IMR-90 (cell line): ENCODE measurements at regions of chr7 and their contacts with region 1.

Region 1: DNA sequence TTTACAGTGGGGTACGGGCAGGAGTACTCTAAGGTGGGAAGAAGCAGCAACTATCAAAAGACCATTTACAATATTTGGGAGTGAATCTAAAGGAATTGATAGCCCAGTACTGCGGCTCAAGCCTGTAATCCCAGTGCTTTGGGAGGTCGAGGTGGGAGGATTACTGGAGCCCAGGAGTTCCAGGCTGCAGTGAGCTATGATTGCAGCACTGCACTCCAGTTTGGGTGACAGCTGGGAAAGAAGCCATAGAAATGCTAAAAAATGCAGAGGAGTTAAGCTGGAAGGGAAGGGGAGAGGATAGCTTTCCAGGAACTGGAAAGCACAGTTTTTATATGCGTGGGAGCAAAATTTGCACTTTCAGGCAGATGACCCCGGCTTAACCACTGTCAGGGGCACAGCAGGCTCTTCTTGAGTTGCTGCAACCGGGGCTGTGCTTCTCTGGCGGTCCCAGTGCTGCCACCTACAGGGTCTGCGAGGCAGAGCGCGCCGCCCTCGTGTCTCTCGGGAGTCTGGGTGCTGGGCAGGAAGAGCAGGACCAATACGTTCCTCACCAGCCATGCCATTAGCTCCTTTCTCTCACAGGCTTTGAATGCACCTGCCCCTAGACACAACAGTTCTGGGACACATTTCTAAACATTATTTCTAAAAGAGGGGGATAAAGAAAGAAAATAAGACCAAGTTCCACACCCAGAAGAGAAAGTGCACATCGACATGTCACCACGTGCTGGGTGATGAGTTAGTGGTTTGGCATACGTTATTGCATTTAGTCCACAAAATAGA is 10.1 kb upstream of the BMPER start:
- DNase-seq: peak; percentile 75
- ATAC-seq: peak; percentile 100
- H3K4me3 ChIP-seq: no peak overlapping the region
- H3K27ac ChIP-seq: no peak overlapping the region
- H3K4me1 ChIP-seq: no peaks in the 10 kb centered on the region
- H3K27me3 ChIP-seq: peaks cover 13% of the 10 kb centered on the region
- CTCF ChIP-seq: peak; percentile 85
- POLR2A ChIP-seq: no peak
- RAD21 ChIP-seq: peak; percentile 82

Region 2: DNA sequence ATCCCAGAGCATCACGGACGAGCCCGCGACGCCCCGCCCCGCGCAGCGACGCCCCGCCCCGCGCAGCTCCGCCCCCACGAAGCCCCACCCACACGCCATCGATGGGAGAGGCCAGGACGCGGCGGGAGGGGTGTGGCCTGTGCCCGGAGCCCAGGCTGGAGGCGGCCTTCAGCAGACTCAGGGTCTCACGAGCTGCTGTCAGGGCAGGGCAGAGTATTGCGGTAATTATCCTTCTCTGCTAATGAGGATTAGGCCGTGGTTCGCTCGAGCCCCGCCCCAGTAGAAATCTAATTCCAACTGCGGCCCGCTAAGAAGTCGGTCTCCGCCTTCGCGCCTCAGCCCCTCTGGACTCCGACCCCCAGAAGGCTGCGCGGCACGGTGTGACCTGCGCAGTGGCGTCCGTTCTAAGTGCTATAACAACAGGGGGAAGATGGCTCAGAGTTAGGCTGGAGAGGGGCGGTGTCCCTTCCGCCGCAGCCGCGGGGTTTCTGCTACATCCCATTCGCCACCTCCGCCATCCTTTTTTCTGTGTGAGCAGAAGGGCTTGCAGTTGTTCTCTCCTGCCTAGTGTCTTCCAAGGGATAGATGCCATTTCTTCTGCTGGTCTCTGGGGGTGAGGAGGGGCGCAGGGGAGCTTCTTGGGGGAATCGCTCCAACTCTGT is 832.3 kb before region 1 on chr7:
- CTCF ChIA-PET with region 1: no interaction called
- POLR2A ChIA-PET with region 1: no interaction called
- dilution Hi-C with region 1: no loop called
- in situ Hi-C with region 1: no loop called
- intact Hi-C with region 1: no loop called
- DNase-seq: peak; percentile 93
- ATAC-seq: peak; percentile 98
- H3K4me3 ChIP-seq: peak overlapping the region; percentile 72
- H3K27ac ChIP-seq: peak overlapping the region; percentile 97
- H3K4me1 ChIP-seq: no peaks in the 10 kb centered on the region
- H3K27me3 ChIP-seq: no peaks in the 10 kb centered on the region
- CTCF ChIP-seq: no peak
- POLR2A ChIP-seq: peak; percentile 60; the same call in 1 of the 2 replicates
- RAD21 ChIP-seq: no peak

Region 3: DNA sequence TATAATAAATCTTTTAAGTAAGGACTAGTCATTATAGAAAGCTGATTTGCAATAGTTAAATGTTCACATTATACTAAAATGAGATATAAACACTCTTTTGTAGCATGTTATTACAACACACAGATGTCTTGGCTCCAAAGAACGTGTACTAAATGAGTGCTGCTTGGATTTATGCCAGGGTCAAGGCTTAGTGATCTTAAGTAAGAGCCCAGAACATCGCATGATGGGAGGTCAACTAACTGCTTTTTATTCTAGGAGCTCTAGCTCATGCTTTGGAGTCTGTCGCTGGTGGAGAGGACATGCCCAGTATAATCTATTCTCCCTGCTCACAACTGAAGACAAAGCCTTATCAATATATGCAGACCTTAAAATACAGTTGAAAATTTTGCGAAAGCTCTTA is 450.7 kb before region 1 on chr7:
- CTCF ChIA-PET with region 1: no interaction called
- POLR2A ChIA-PET with region 1: no interaction called
- dilution Hi-C with region 1: no loop called
- in situ Hi-C with region 1: no loop called
- intact Hi-C with region 1: loop called (anchors 1 kb)
- DNase-seq: peak; percentile 65
- ATAC-seq: peak; percentile 32
- H3K4me3 ChIP-seq: no peak overlapping the region
- H3K27ac ChIP-seq: no peak overlapping the region
- H3K4me1 ChIP-seq: no peaks in the 10 kb centered on the region
- H3K27me3 ChIP-seq: no peaks in the 10 kb centered on the region
- CTCF ChIP-seq: no peak
- POLR2A ChIP-seq: no peak
- RAD21 ChIP-seq: no peak

Region 4: GRCh38 chr7:33459340-33459751 is 435.9 kb before region 1 on chr7:
- CTCF ChIA-PET with region 1: interaction called, 12 read pairs
- POLR2A ChIA-PET with region 1: no interaction called
- dilution Hi-C with region 1: no loop called
- in situ Hi-C with region 1: no loop called
- intact Hi-C with region 1: no loop called
- DNase-seq: peak; percentile 66
- ATAC-seq: peak; percentile 99
- H3K4me3 ChIP-seq: no peak overlapping the region
- H3K27ac ChIP-seq: no peak overlapping the region
- H3K4me1 ChIP-seq: no peaks in the 10 kb centered on the region
- H3K27me3 ChIP-seq: no peaks in the 10 kb centered on the region
- CTCF ChIP-seq: peak; percentile 54
- POLR2A ChIP-seq: no peak
- RAD21 ChIP-seq: peak; percentile 64

Region 5: DNA sequence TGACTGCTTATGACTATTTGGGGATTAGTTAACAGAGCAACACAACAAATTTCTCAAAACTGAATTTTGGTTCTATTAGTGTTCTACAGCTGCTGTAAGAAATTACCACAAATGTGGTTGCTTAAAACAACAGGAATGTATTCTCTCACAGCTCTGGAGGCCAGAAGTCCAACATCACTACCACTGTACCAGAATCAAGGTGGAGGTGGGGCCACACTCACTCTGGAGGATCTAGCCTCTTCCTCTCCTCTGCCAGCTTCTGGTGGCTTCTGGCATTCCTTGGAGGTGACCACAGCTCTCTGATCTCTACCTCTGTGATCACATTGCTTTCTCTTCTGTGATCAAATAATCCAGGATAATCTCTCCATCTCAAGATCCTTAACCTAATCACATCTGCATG is 184.6 kb before region 1 on chr7:
- CTCF ChIA-PET with region 1: no interaction called
- POLR2A ChIA-PET with region 1: no interaction called
- dilution Hi-C with region 1: no loop called
- in situ Hi-C with region 1: no loop called
- intact Hi-C with region 1: no loop called
- DNase-seq: peak; percentile 14
- ATAC-seq: peak; percentile 37; the same call in 1 of the 2 replicates
- H3K4me3 ChIP-seq: no peak overlapping the region
- H3K27ac ChIP-seq: no peak overlapping the region
- H3K4me1 ChIP-seq: peaks cover 5% of the 10 kb centered on the region
- H3K27me3 ChIP-seq: peaks cover 4% of the 10 kb centered on the region; the same call in 1 of the 2 replicates
- CTCF ChIP-seq: no peak
- POLR2A ChIP-seq: no peak
- RAD21 ChIP-seq: no peak

Region 6: GRCh38 chr7:33764752-33765451 is 130.3 kb before region 1 on chr7:
- CTCF ChIA-PET with region 1: no interaction called
- POLR2A ChIA-PET with region 1: no interaction called
- dilution Hi-C with region 1: no loop called
- in situ Hi-C with region 1: loop called (anchors 10 kb)
- intact Hi-C with region 1: no loop called
- DNase-seq: peak; percentile 93
- ATAC-seq: peak; percentile 91
- H3K4me3 ChIP-seq: no peak overlapping the region
- H3K27ac ChIP-seq: no peak overlapping the region
- H3K4me1 ChIP-seq: peaks cover 3% of the 10 kb centered on the region
- H3K27me3 ChIP-seq: peaks cover 2% of the 10 kb centered on the region; the same call in 1 of the 2 replicates
- CTCF ChIP-seq: no peak
- POLR2A ChIP-seq: no peak
- RAD21 ChIP-seq: no peak

Region 7: GRCh38 chr7:33841705-33842129 is 53.5 kb before region 1 on chr7:
- CTCF ChIA-PET with region 1: no interaction called
- POLR2A ChIA-PET with region 1: interaction called, 12 read pairs
- dilution Hi-C with region 1: no loop called
- in situ Hi-C with region 1: no loop called
- intact Hi-C with region 1: loop called (anchors 2 kb)
- DNase-seq: peak; percentile 25
- ATAC-seq: peak; percentile 46
- H3K4me3 ChIP-seq: no peak overlapping the region
- H3K27ac ChIP-seq: no peak overlapping the region
- H3K4me1 ChIP-seq: no peaks in the 10 kb centered on the region
- H3K27me3 ChIP-seq: peaks cover 16% of the 10 kb centered on the region
- CTCF ChIP-seq: no peak
- POLR2A ChIP-seq: no peak
- RAD21 ChIP-seq: no peak